Naive thymus-derived CD4-positive, alpha-beta T cell (primary cell): ENCODE measurements at regions of chr10 and their contacts with region 1.

Region 1: GRCh38 chr10:72364239-72364777 is 9.6 kb upstream of the DNAJB12 start:
- DNase-seq: peak; percentile 66 to 90 (median 85)
- ATAC-seq: peak; percentile 100
- H3K4me3 ChIP-seq: peak overlapping the region; percentile 31
- H3K4me3 Mint-ChIP-seq: peak overlapping the region in 9 of 10 donors; percentile 4 to 74 (median 45)
- H3K27ac ChIP-seq: peak overlapping the region; percentile 61
- H3K27ac Mint-ChIP-seq: peak overlapping the region; percentile 15 to 94 (median 81)
- H3K4me1 ChIP-seq: peaks cover 12% of the 10 kb centered on the region in 2 donors
- H3K4me1 Mint-ChIP-seq: peaks cover 7 to 25% (median 13%) of the 10 kb centered on the region in 7 donors
- H3K27me3 ChIP-seq: no peaks in the 10 kb centered on the region
- H3K27me3 Mint-ChIP-seq: peaks cover 0 to 5% (median 0%) of the 10 kb centered on the region in 5 donors

Region 2: GRCh38 chr10:72567884-72568640 is 203.8 kb after region 1 on chr10:
- CTCF ChIA-PET with region 1: no interaction called
- POLR2A ChIA-PET with region 1: no interaction called
- intact Hi-C with region 1: loop called in 1 of 2 experiments (anchors 5 kb)
- DNase-seq: no peak
- ATAC-seq: no peak
- H3K4me3 ChIP-seq: no peak overlapping the region
- H3K4me3 Mint-ChIP-seq: no peak overlapping the region
- H3K27ac ChIP-seq: no peak overlapping the region
- H3K27ac Mint-ChIP-seq: peak overlapping the region in 1 of 9 donors; percentile 12
- H3K4me1 ChIP-seq: peaks cover 0 to 4% of the 10 kb centered on the region in 2 donors
- H3K4me1 Mint-ChIP-seq: peaks cover 5 to 19% (median 12%) of the 10 kb centered on the region in 7 donors
- H3K27me3 ChIP-seq: no peaks in the 10 kb centered on the region
- H3K27me3 Mint-ChIP-seq: no peaks in the 10 kb centered on the region

Region 3: GRCh38 chr10:72692057-72692910 is 328.0 kb after region 1 on chr10 and contains the start of gene MCU:
- CTCF ChIA-PET with region 1: interaction called, 7 read pairs
- POLR2A ChIA-PET with region 1: no interaction called
- intact Hi-C with region 1: loop called (anchors 1 to 2 kb)
- DNase-seq: peak; percentile 85 to 94 (median 91)
- ATAC-seq: peak; percentile 98
- H3K4me3 ChIP-seq: peak within 1 kb of the TSS; percentile 86
- H3K4me3 Mint-ChIP-seq: peak within 1 kb of the TSS; percentile 84 to 93 (median 91)
- H3K27ac ChIP-seq: peak within 1 kb of the TSS; percentile 68
- H3K27ac Mint-ChIP-seq: peak within 1 kb of the TSS; percentile 5 to 93 (median 76)
- H3K4me1 ChIP-seq: peaks cover 11 to 12% of the 10 kb centered on the region in 2 donors
- H3K4me1 Mint-ChIP-seq: peaks cover 9 to 39% (median 32%) of the 10 kb centered on the region in 7 donors
- H3K27me3 ChIP-seq: no peaks in the 10 kb centered on the region
- H3K27me3 Mint-ChIP-seq: peaks cover 0 to 6% (median 0%) of the 10 kb centered on the region in 5 donors
- total RNA-seq, gene MCU: 7.7 to 14.3 (median 12.7) TPM

Region 4: GRCh38 chr10:72875250-72876055 is 511.1 kb after region 1 on chr10:
- CTCF ChIA-PET with region 1: interaction called, 8 read pairs
- POLR2A ChIA-PET with region 1: no interaction called
- intact Hi-C with region 1: loop called (anchors 1 kb)
- DNase-seq: peak in 4 of 9 donors; percentile 16 to 28 (median 19)
- ATAC-seq: no peak
- H3K4me3 ChIP-seq: no peak overlapping the region
- H3K4me3 Mint-ChIP-seq: no peak overlapping the region
- H3K27ac ChIP-seq: no peak overlapping the region
- H3K27ac Mint-ChIP-seq: no peak overlapping the region
- H3K4me1 ChIP-seq: no peaks in the 10 kb centered on the region
- H3K4me1 Mint-ChIP-seq: peaks cover 0 to 3% (median 0%) of the 10 kb centered on the region in 7 donors
- H3K27me3 ChIP-seq: no peaks in the 10 kb centered on the region
- H3K27me3 Mint-ChIP-seq: no peaks in the 10 kb centered on the region

Region 5: GRCh38 chr10:73159038-73159648 is 794.8 kb after region 1 on chr10:
- CTCF ChIA-PET with region 1: interaction called, 3 read pairs
- POLR2A ChIA-PET with region 1: no interaction called
- intact Hi-C with region 1: loop called (anchors 1 kb)
- DNase-seq: peak in 8 of 9 donors; percentile 33 to 67 (median 58)
- ATAC-seq: peak; percentile 86
- H3K4me3 ChIP-seq: no peak overlapping the region
- H3K4me3 Mint-ChIP-seq: peak overlapping the region in 1 of 10 donors; percentile 16
- H3K27ac ChIP-seq: no peak overlapping the region
- H3K27ac Mint-ChIP-seq: peak overlapping the region in 3 of 9 donors; percentile 22 to 74 (median 42)
- H3K4me1 ChIP-seq: peaks cover 9 to 10% of the 10 kb centered on the region in 2 donors
- H3K4me1 Mint-ChIP-seq: peaks cover 27 to 44% (median 39%) of the 10 kb centered on the region in 7 donors
- H3K27me3 ChIP-seq: no peaks in the 10 kb centered on the region
- H3K27me3 Mint-ChIP-seq: no peaks in the 10 kb centered on the region

Region 6: DNA sequence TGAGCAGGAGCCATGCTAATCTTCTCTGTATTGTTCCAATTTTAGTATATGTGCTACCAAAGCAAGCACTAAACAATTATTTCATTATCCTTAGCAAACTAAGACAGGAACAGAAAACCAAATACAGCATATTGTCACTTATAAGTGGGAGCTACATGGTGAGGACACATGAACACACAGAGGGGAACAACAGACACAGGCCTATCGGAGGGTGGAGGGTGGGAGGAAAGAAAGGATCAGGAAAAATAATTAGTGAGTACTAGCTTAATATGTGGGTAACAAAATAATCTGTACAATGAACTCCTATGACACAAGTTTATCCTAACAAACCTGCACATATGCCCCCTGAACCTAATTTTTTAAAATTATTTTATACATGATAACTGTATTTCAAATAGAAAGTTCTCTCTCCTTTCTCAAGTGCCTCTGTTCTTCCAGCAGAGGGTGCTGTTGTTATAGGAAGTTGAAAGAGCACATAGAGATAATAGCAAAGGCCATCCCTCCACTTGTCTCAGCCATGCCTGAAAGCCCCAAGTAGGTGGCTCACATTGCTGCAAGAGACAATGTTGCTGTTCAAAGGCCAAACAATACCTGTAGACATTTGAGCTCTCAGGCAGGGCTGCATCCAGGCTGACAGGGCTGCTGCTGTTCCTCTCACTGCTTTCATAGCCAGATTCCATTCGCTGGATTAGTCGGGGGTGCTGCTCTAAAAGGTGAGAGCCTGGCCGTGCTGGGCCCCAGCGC is 1165.0 kb after region 1 on chr10:
- CTCF ChIA-PET with region 1: no interaction called
- POLR2A ChIA-PET with region 1: no interaction called
- intact Hi-C with region 1: no loop called
- DNase-seq: peak in 8 of 9 donors; percentile 23 to 82 (median 73)
- ATAC-seq: peak; percentile 93
- H3K4me3 ChIP-seq: no peak overlapping the region
- H3K4me3 Mint-ChIP-seq: no peak overlapping the region
- H3K27ac ChIP-seq: no peak overlapping the region
- H3K27ac Mint-ChIP-seq: no peak overlapping the region
- H3K4me1 ChIP-seq: no peaks in the 10 kb centered on the region
- H3K4me1 Mint-ChIP-seq: no peaks in the 10 kb centered on the region
- H3K27me3 ChIP-seq: no peaks in the 10 kb centered on the region
- H3K27me3 Mint-ChIP-seq: peaks cover 0 to 2% (median 0%) of the 10 kb centered on the region in 5 donors

Region 7: GRCh38 chr10:73865459-73866442 is 1501.4 kb after region 1 on chr10:
- CTCF ChIA-PET with region 1: no interaction called
- POLR2A ChIA-PET with region 1: no interaction called
- intact Hi-C with region 1: no loop called
- DNase-seq: peak; percentile 18 to 50 (median 47)
- ATAC-seq: peak; percentile 90
- H3K4me3 ChIP-seq: peak overlapping the region; percentile 60
- H3K4me3 Mint-ChIP-seq: peak overlapping the region; percentile 79 to 92 (median 87)
- H3K27ac ChIP-seq: peak overlapping the region; percentile 67
- H3K27ac Mint-ChIP-seq: peak overlapping the region; percentile 88 to 97 (median 96)
- H3K4me1 ChIP-seq: peaks cover 28 to 72% of the 10 kb centered on the region in 2 donors
- H3K4me1 Mint-ChIP-seq: peaks cover 56 to 92% (median 88%) of the 10 kb centered on the region in 7 donors
- H3K27me3 ChIP-seq: no peaks in the 10 kb centered on the region
- H3K27me3 Mint-ChIP-seq: no peaks in the 10 kb centered on the region